AG04449 (cell line): ENCODE measurements at regions of chr7 and their contacts with region 1.

Region 1: DNA sequence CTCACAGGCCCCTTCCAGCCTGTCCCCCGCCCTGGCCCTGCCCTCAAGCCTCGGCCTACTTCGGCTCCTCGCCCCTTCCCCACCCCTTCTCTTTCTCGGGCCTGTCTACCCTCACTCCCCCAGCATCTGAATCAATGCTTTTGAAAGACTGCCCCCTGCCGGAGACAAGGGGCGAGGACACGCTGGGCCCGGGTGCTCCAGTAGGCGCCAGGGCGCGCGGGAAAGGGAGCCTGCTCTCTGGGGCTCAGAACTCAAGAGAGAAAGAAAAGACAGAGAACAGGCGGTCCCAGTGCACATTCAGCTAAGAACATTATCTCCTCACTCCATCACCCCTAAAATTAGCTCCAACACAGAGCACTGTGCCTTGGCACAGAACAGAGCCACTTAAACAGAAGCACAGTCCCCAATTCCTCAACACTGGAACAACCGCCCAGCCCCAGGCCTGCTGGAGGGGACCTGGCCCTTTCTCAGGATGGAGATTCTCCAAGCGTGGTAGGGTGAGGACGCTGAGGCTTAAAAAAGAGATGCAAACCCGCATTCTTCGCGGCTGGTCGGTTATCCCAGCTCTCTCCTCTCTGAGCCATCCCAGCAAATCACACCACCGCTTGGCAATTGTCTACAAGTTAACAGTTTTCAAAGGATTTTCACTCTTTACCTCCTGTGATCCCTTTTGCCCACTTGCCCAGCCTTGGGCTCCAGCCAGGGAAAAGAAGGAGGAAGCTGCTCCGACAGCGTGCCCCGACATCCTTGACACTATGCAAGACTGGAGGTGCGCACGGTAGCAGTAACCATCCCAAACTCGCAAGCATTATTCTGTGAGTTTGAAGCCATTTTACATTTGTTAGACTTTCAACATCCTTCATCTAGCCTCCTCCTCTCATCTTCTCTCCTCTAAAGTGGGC is 2.1 kb downstream of the GIGYF1 start:
- DNase-seq: no peak
- H3K4me3 ChIP-seq: peak overlapping the region; percentile 74
- CTCF ChIP-seq: peak; percentile 88

Region 2: DNA sequence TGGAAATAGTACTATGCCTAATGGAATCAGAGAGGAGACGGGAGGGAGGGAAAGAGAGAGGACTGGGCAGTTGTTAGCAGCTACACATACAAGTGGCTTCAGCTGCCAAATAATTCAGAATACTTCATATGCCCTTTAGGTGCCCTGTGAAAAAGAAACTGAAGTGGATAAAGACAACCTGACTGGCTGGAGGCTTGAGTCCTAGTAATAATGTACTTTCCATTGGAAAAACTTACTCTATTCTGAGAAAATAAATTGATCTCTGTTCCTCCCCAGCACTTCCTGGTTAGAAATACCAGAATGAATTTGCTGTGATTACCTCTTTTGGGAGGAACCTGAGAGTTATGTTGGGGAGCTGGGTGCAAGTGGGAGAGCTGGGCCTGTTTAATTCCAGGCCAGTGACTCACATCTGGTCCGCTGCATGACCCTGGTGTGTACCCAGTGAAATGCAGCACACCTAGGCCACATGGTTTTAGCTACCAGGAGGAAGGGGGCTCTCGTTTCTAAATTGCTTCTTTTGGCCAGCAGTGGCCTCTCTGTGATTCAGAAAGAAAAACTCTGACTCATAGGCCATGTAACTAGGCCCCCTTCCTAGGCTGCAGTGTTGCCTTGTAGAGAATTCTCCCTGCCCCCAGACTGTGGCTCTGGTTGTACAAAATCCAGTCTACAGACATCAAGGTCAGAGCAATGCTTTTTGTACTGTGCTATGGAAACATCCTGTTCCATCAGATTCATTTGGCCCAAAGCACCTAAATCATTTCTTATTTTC is 146.4 kb before region 1 on chr7:
- CTCF ChIA-PET with region 1: interaction called, 11 read pairs
- POLR2A ChIA-PET with region 1: no interaction called
- DNase-seq: peak; percentile 41
- H3K4me3 ChIP-seq: no peak overlapping the region; the same call in 1 of the 2 replicates
- CTCF ChIP-seq: no peak

Region 3: GRCh38 chr7:100586266-100587025 is 105.5 kb before region 1 on chr7 and contains the start of gene FBXO24:
- CTCF ChIA-PET with region 1: interaction called, 30 read pairs
- POLR2A ChIA-PET with region 1: interaction called, 5 read pairs
- DNase-seq: peak; percentile 100
- H3K4me3 ChIP-seq: peak within 1 kb of the TSS; percentile 92
- CTCF ChIP-seq: no peak

Region 4: GRCh38 chr7:100620804-100621203 is 71.1 kb before region 1 on chr7:
- CTCF ChIA-PET with region 1: interaction called, 25 read pairs
- POLR2A ChIA-PET with region 1: no interaction called
- DNase-seq: no peak
- H3K4me3 ChIP-seq: no peak overlapping the region
- CTCF ChIP-seq: no peak

Region 5: GRCh38 chr7:100803398-100804233 is 111.7 kb after region 1 on chr7:
- CTCF ChIA-PET with region 1: interaction called, 11 read pairs
- POLR2A ChIA-PET with region 1: no interaction called
- DNase-seq: peak; percentile 49
- H3K4me3 ChIP-seq: no peak overlapping the region
- CTCF ChIP-seq: no peak